ENCODE measurements at regions of chr12 and their contacts with region 1.

Region 1: DNA sequence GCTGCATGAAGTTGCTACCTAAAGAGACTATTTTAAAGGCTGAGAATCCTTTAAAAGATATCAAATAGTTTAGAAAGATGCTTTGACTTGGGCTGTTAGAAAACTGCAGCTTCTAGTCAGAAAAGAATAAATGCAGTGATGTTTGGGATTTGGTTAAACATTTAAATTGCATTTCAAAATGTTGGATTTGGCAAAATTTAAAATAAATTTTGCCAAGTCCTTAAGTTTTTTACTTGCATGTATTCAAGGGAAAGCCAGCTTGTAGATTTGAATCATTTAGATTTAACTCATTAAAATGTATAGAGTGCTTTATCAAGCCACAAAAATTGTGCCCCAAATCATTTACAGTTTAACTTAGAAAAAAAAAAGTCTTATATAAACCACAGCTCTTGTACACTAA is 109.7 kb downstream of the ANKS1B start:
- DNase-seq: no peak
- H3K4me3 ChIP-seq: no peak overlapping the region
- H3K27ac ChIP-seq: no peak overlapping the region
- H3K4me1 ChIP-seq: no peaks in the 10 kb centered on the region
- H3K27me3 ChIP-seq: no peaks in the 10 kb centered on the region
- CTCF ChIP-seq: no peak

Region 2: GRCh38 chr12:99619389-99620158 is 255.5 kb before region 1 on chr12:
- CTCF ChIA-PET with region 1: no interaction called
- dilution Hi-C with region 1: no loop called
- in situ Hi-C with region 1: no loop called
- intact Hi-C with region 1: no loop called
- DNase-seq: peak; percentile 37
- H3K4me3 ChIP-seq: no peak overlapping the region
- H3K27ac ChIP-seq: no peak overlapping the region
- H3K4me1 ChIP-seq: no peaks in the 10 kb centered on the region
- H3K27me3 ChIP-seq: no peaks in the 10 kb centered on the region
- CTCF ChIP-seq: peak; percentile 51 to 81

Region 3: DNA sequence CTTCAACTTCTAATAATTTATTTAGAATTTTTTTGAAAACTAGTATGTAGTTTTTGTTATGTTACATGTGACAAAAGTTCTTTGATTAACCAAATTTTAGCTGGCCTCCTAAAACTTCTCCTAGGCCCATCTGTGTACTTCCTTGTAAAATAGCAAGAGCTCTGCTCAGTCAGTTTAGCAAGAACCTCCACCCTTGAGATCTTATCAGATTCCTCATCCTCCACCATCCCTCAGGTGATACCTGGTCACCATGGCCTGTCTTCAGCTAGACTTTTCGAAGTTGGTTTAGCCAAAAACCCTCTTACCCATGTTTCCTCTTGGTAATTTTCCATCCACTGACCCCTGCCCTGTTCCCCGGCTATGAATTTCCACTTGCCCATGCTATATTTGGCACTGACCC is 32.8 kb before region 1 on chr12:
- CTCF ChIA-PET with region 1: no interaction called
- dilution Hi-C with region 1: loop called (anchors 5 kb)
- in situ Hi-C with region 1: no loop called
- intact Hi-C with region 1: no loop called
- DNase-seq: no peak
- H3K4me3 ChIP-seq: no peak overlapping the region
- H3K27ac ChIP-seq: no peak overlapping the region
- H3K4me1 ChIP-seq: no peaks in the 10 kb centered on the region
- H3K27me3 ChIP-seq: no peaks in the 10 kb centered on the region
- CTCF ChIP-seq: no peak

Region 4: GRCh38 chr12:99997806-99998205 is 122.7 kb after region 1 on chr12:
- CTCF ChIA-PET with region 1: no interaction called
- dilution Hi-C with region 1: no loop called
- in situ Hi-C with region 1: no loop called
- intact Hi-C with region 1: no loop called
- DNase-seq: no peak
- H3K4me3 ChIP-seq: no peak overlapping the region
- H3K27ac ChIP-seq: no peak overlapping the region
- H3K4me1 ChIP-seq: no peaks in the 10 kb centered on the region
- H3K27me3 ChIP-seq: no peaks in the 10 kb centered on the region
- CTCF ChIP-seq: no peak